ENCODE measurements at regions of chr7 and their contacts with region 1.

Region 1: DNA sequence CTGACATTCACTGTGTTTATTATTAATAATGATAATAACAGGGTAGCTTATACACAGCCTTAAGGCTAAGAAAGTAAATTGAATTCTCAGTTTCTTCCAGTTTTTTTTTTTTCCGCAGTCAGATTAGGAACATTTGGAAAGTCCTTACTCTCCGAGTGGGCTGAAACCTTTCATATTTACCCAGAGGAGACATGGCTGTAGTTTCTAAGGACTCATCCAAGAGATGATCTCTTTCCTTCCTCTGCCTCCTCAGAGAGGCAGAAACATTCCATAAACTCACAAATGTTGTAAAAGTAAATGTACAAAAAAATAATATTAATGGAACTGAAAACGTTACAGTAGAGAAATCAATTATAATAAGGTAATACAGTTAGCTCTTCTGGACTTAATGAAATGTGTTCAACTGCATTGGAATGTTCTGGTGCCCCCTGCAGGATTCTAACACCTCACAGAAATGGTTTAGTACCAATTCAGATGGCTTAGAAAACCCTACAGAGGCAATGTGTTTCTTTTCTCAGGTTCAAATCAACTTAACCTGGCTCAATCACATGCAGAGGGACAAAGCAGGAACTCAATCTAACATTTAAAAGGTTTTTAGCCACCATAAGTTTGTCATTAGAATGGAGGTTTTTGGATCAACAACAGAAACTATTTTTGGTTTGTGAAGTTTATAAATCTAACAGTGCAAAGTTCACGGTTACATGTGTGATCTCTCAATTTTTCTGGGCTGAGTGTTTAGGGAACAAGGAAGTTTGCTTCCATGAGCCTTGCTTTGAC is 71.7 kb downstream of the ICA1 start:
- DNase-seq: peak; percentile 41
- H3K4me3 Mint-ChIP-seq: no peak overlapping the region
- H3K27ac Mint-ChIP-seq: no peak overlapping the region
- H3K4me1 Mint-ChIP-seq: peaks cover 41% of the 10 kb centered on the region
- H3K27me3 Mint-ChIP-seq: peaks cover 5% of the 10 kb centered on the region

Region 2: DNA sequence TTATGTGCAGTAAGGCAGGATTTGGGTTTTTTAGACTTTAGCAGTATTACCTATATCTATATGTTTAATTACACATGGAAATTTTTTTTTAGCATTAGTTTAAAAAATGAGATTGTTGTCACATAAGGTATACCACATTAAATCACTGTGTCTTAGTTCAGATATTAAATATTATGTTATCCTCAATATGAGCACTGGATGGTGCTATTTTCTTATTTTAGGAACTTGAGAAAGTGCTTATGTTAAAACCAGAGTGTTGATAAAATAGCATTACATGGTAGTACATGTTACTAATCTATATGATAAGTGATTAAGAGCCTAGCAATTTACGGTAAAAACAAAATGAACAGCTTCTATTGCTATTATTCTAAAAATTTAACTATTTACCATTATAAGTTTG is 594.9 kb before region 1 on chr7:
- intact Hi-C with region 1: loop called (anchors 5 kb)
- DNase-seq: no peak
- H3K4me3 Mint-ChIP-seq: no peak overlapping the region
- H3K27ac Mint-ChIP-seq: no peak overlapping the region
- H3K4me1 Mint-ChIP-seq: no peaks in the 10 kb centered on the region
- H3K27me3 Mint-ChIP-seq: no peaks in the 10 kb centered on the region

Region 3: DNA sequence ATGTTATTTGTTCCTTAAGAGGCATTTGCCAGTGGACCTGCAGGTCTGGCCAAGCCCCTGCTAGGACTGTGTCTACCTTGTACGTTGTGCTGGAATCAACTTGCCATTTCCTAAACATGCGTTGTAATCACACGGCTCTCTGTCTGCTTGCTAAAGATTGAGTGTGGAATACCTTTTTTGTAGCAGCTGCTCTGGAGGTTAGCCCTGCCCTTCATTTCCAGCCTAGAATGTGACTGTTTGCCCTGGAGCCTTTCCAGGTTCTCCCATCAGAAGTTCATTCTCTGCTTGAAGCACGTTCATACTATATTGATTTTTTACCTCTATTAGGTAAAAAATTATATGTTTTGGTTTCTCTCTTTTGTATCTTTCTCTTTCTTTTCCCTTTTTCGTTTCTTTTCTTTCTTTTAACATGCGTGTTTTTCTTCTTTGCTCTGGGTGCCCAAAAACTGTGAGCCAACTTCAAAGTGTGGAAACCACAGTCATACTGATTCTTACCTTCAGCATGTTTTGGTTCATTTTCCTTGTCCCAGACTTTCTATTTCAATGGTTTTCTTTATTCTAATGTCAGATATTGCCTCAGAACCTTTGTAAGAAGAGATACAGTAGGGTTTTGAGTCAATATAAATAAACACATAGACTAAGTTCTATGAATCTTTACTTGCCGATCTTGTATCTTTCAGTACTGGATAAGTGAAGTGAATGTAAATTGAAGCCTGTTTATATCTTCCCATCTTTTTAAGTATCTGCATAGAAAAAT is 360.0 kb before region 1 on chr7:
- intact Hi-C with region 1: loop called (anchors 5 kb)
- DNase-seq: no peak
- H3K4me3 Mint-ChIP-seq: no peak overlapping the region
- H3K27ac Mint-ChIP-seq: peak overlapping the region; percentile 61
- H3K4me1 Mint-ChIP-seq: peaks cover 7% of the 10 kb centered on the region
- H3K27me3 Mint-ChIP-seq: peaks cover 2% of the 10 kb centered on the region

Region 4: GRCh38 chr7:7867846-7868571 is 322.3 kb before region 1 on chr7:
- intact Hi-C with region 1: no loop called
- DNase-seq: no peak
- H3K4me3 Mint-ChIP-seq: no peak overlapping the region
- H3K27ac Mint-ChIP-seq: no peak overlapping the region
- H3K4me1 Mint-ChIP-seq: no peaks in the 10 kb centered on the region
- H3K27me3 Mint-ChIP-seq: no peaks in the 10 kb centered on the region

Region 5: GRCh38 chr7:8035647-8036518 is 154.4 kb before region 1 on chr7:
- intact Hi-C with region 1: loop called (anchors 2 kb)
- DNase-seq: no peak
- H3K4me3 Mint-ChIP-seq: no peak overlapping the region
- H3K27ac Mint-ChIP-seq: no peak overlapping the region
- H3K4me1 Mint-ChIP-seq: peaks cover 18% of the 10 kb centered on the region
- H3K27me3 Mint-ChIP-seq: no peaks in the 10 kb centered on the region

Region 6: GRCh38 chr7:8357536-8357935 is 167.2 kb after region 1 on chr7:
- intact Hi-C with region 1: no loop called
- DNase-seq: no peak
- H3K4me3 Mint-ChIP-seq: no peak overlapping the region
- H3K27ac Mint-ChIP-seq: no peak overlapping the region
- H3K4me1 Mint-ChIP-seq: no peaks in the 10 kb centered on the region
- H3K27me3 Mint-ChIP-seq: peaks cover 9% of the 10 kb centered on the region